IMR-90 (cell line): ENCODE measurements at regions of chr14 and their contacts with region 1.

Region 1: GRCh38 chr14:85535991-85536832 is 6.3 kb downstream of the FLRT2 start:
- DNase-seq: peak; percentile 79
- ATAC-seq: no peak
- H3K4me3 ChIP-seq: peak overlapping the region; percentile 29
- H3K27ac ChIP-seq: peak overlapping the region; percentile 51; the same call in 1 of the 2 replicates
- H3K4me1 ChIP-seq: no peaks in the 10 kb centered on the region; the same call in 1 of the 2 replicates
- H3K27me3 ChIP-seq: no peaks in the 10 kb centered on the region
- CTCF ChIP-seq: peak; percentile 60
- POLR2A ChIP-seq: no peak
- RAD21 ChIP-seq: peak; percentile 61

Region 2: GRCh38 chr14:85380881-85381280 is 155.3 kb before region 1 on chr14:
- CTCF ChIA-PET with region 1: no interaction called
- POLR2A ChIA-PET with region 1: no interaction called
- dilution Hi-C with region 1: no loop called
- in situ Hi-C with region 1: no loop called
- intact Hi-C with region 1: no loop called
- DNase-seq: no peak
- ATAC-seq: no peak
- H3K4me3 ChIP-seq: no peak overlapping the region
- H3K27ac ChIP-seq: no peak overlapping the region
- H3K4me1 ChIP-seq: no peaks in the 10 kb centered on the region
- H3K27me3 ChIP-seq: no peaks in the 10 kb centered on the region
- CTCF ChIP-seq: no peak
- POLR2A ChIP-seq: no peak
- RAD21 ChIP-seq: no peak

Region 3: DNA sequence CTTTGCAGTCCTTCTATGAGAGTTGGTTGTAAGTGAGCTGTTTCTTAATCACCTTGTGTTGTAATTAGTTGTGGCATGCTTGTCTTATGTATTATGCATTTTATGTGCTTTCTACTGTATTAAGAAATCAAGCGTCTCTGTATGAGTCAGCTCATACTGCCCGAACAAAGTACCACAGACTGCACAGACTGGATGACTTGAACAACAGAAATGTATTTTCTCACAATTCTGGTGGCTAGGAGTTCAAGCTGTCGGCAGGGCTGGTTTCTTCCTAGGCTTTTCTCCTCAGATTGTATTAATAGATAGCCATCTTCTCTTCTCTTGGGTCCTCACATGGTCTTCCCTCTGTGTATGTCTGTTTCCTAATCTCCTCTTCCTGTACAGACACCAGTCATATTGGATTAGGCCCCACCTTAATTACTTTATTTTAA is 71.5 kb after region 1 on chr14:
- CTCF ChIA-PET with region 1: interaction called, 10 read pairs
- POLR2A ChIA-PET with region 1: no interaction called
- dilution Hi-C with region 1: no loop called
- in situ Hi-C with region 1: no loop called
- intact Hi-C with region 1: loop called (anchors 2 kb)
- DNase-seq: peak; percentile 97
- ATAC-seq: peak; percentile 95
- H3K4me3 ChIP-seq: no peak overlapping the region
- H3K27ac ChIP-seq: peak overlapping the region; percentile 15; the same call in 1 of the 2 replicates
- H3K4me1 ChIP-seq: peaks cover 11% of the 10 kb centered on the region
- H3K27me3 ChIP-seq: no peaks in the 10 kb centered on the region
- CTCF ChIP-seq: no peak
- POLR2A ChIP-seq: no peak
- RAD21 ChIP-seq: 0 out of 2 replicates have a peak, but pooled peaks have one; percentile 10

Region 4: DNA sequence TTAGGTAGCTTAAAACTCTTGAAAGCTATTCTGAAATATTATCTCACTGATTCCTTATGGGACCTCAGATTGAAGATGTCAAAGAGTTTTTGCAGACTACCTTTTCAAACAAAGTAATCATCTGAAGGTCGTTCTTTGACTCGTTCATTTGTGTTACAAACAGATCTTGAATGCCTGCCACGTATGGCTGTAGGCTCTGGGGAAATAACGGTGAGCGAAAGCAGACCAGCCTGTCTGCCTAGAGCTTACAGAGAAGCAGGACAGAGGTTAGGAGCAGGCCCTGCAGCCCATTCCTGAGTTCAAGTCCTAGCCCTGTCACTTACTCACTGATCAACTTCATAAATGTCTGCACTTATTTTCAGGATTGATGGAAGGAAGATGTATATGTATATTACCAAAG is 77.3 kb after region 1 on chr14:
- CTCF ChIA-PET with region 1: interaction called, 10 read pairs
- POLR2A ChIA-PET with region 1: no interaction called
- dilution Hi-C with region 1: no loop called
- in situ Hi-C with region 1: no loop called
- intact Hi-C with region 1: loop called (anchors 2 kb)
- DNase-seq: no peak
- ATAC-seq: no peak
- H3K4me3 ChIP-seq: no peak overlapping the region
- H3K27ac ChIP-seq: no peak overlapping the region
- H3K4me1 ChIP-seq: no peaks in the 10 kb centered on the region
- H3K27me3 ChIP-seq: no peaks in the 10 kb centered on the region
- CTCF ChIP-seq: no peak
- POLR2A ChIP-seq: no peak
- RAD21 ChIP-seq: no peak

Region 5: DNA sequence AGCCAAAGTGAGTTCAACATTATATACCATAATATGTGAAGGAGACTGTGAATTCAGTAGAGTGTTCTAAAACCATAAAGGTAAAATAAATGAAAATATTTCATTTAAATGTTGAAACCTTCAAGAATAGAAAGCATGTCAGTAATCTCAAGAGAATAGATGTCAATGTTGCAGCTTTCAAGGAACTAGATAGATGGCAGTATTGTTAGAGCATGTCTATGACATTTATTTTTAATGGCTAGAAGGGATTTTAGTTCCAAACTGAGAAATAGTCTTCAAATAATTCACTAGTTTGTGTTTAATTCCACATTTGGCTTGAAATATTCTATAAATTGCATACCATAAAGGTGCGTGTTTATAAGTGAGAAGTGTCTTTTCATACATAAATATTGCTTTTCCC is 320.2 kb after region 1 on chr14:
- CTCF ChIA-PET with region 1: no interaction called
- POLR2A ChIA-PET with region 1: no interaction called
- dilution Hi-C with region 1: no loop called
- in situ Hi-C with region 1: no loop called
- intact Hi-C with region 1: loop called (anchors 1 kb)
- DNase-seq: no peak
- ATAC-seq: no peak
- H3K4me3 ChIP-seq: no peak overlapping the region
- H3K27ac ChIP-seq: no peak overlapping the region
- H3K4me1 ChIP-seq: no peaks in the 10 kb centered on the region
- H3K27me3 ChIP-seq: no peaks in the 10 kb centered on the region
- CTCF ChIP-seq: peak; percentile 24; the same call in 1 of the 2 replicates
- POLR2A ChIP-seq: no peak
- RAD21 ChIP-seq: no peak

Region 6: DNA sequence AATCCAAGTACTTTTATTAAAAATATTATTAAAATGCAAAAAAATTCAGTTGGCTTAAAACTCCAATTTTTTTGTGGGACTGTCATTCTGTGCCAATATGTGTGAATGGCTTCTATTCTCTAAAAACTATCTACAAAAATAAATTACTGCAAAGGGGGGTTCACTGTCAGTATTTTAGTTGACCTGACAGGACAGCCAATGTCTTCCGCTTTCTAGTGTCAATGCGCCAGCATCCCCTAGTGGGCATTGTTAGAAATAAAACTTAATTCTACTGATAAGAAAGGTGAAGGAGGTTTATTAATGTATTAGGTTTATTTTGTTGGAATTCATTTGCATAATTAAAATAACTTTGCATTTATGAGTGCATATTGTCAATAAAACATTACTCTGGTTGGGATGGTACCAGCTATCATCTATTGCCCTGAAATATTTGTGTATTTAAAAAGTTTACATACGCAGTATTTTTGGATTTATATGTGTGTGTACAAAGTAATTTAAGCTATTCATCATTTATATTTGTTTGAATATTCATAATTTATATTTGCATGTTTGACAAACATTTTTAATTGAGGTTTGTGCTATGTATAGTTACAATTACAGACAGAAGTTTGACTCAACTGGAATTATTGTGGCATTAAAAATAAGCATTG is 520.9 kb after region 1 on chr14:
- CTCF ChIA-PET with region 1: no interaction called
- POLR2A ChIA-PET with region 1: no interaction called
- dilution Hi-C with region 1: no loop called
- in situ Hi-C with region 1: no loop called
- intact Hi-C with region 1: loop called (anchors 2 kb)
- DNase-seq: peak; percentile 39
- ATAC-seq: peak; percentile 51; the same call in 1 of the 2 replicates
- H3K4me3 ChIP-seq: no peak overlapping the region
- H3K27ac ChIP-seq: no peak overlapping the region
- H3K4me1 ChIP-seq: no peaks in the 10 kb centered on the region
- H3K27me3 ChIP-seq: no peaks in the 10 kb centered on the region
- CTCF ChIP-seq: peak; percentile 86
- POLR2A ChIP-seq: no peak
- RAD21 ChIP-seq: peak; percentile 86

Region 7: GRCh38 chr14:87049950-87050349 is 1513.7 kb after region 1 on chr14:
- CTCF ChIA-PET with region 1: no interaction called
- POLR2A ChIA-PET with region 1: no interaction called
- dilution Hi-C with region 1: no loop called
- in situ Hi-C with region 1: no loop called
- intact Hi-C with region 1: loop called (anchors 5 kb)
- DNase-seq: peak; percentile 47
- ATAC-seq: peak; percentile 92
- H3K4me3 ChIP-seq: no peak overlapping the region
- H3K27ac ChIP-seq: no peak overlapping the region
- H3K4me1 ChIP-seq: no peaks in the 10 kb centered on the region
- H3K27me3 ChIP-seq: no peaks in the 10 kb centered on the region
- CTCF ChIP-seq: peak; percentile 70
- POLR2A ChIP-seq: no peak
- RAD21 ChIP-seq: peak; percentile 69